MCF 10A (cell line): ENCODE measurements at regions of chr15 and their contacts with region 1.

Region 1: GRCh38 chr15:75578948-75579920 is at the start of gene PTPN9:
- DNase-seq: peak; percentile 74
- H3K4me3 Mint-ChIP-seq: peak within 1 kb of the TSS; percentile 95
- H3K27ac Mint-ChIP-seq: peak within 1 kb of the TSS; percentile 97
- H3K4me1 Mint-ChIP-seq: peaks cover 9% of the 10 kb centered on the region
- H3K27me3 Mint-ChIP-seq: no peaks in the 10 kb centered on the region
- CTCF ChIP-seq: peak; percentile 54
- total RNA-seq, gene PTPN9: 31.6 and 33.0 TPM in 2 replicates

Region 2: GRCh38 chr15:75517233-75517632 is 62.0 kb before region 1 on chr15:
- CTCF ChIA-PET with region 1: no interaction called
- POLR2A ChIA-PET with region 1: interaction called, 3 read pairs
- intact Hi-C with region 1: loop called (anchors 10 kb)
- DNase-seq: no peak
- H3K4me3 Mint-ChIP-seq: no peak overlapping the region
- H3K27ac Mint-ChIP-seq: no peak overlapping the region
- H3K4me1 Mint-ChIP-seq: peaks cover 13% of the 10 kb centered on the region
- H3K27me3 Mint-ChIP-seq: no peaks in the 10 kb centered on the region
- CTCF ChIP-seq: no peak

Region 3: GRCh38 chr15:75532413-75533147 is 46.7 kb before region 1 on chr15:
- CTCF ChIA-PET with region 1: interaction called, 3 read pairs
- POLR2A ChIA-PET with region 1: interaction called, 11 read pairs
- intact Hi-C with region 1: loop called (anchors 5 kb)
- DNase-seq: peak; percentile 87
- H3K4me3 Mint-ChIP-seq: peak overlapping the region; percentile 21
- H3K27ac Mint-ChIP-seq: peak overlapping the region; percentile 81
- H3K4me1 Mint-ChIP-seq: peaks cover 30% of the 10 kb centered on the region
- H3K27me3 Mint-ChIP-seq: no peaks in the 10 kb centered on the region
- CTCF ChIP-seq: peak; percentile 38

Region 4: GRCh38 chr15:75591655-75592364 is 12.6 kb after region 1 on chr15:
- CTCF ChIA-PET with region 1: no interaction called
- POLR2A ChIA-PET with region 1: interaction called, 10 read pairs
- intact Hi-C with region 1: no loop called
- DNase-seq: no peak
- H3K4me3 Mint-ChIP-seq: no peak overlapping the region
- H3K27ac Mint-ChIP-seq: no peak overlapping the region
- H3K4me1 Mint-ChIP-seq: no peaks in the 10 kb centered on the region
- H3K27me3 Mint-ChIP-seq: no peaks in the 10 kb centered on the region
- CTCF ChIP-seq: no peak

Region 5: DNA sequence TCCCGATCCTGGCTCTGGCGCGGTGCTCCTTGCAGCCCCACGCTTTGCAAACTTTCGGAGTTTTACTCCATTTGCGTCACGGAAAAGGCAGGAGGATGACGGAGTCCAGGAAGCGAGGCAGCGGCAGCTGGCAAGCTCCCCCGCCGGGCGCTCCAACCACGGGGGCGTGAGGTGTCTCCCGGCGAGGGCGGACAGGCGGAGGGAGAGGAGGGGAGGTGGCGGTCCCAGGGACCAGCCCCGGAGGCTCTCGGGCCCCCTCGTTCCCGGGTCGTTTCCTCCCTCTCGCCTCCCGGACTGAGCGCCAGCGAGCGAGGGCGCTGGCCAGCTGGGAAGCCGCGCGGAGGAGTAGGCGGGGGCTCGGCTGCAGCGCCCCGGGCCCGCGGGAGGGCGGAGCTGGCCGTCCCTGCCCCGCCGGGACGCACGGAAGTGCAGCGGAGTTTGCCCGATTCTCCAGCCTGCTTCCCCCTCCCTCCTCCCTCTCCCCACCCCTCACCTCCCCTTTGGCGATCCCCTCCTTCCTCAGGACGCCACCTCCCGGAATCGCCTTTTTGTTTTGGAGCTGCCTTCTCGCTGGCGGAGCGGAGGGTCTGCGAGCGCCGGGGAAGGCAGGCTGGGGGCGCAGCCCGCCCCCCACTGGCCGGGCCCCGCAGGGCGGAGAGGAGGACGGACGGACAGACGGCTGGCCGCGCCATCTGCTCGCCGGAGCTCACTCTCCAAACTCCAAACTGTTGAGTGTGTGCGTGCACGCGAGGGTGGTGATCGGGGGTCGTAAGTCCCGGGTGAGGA is 68.3 kb after region 1 on chr15 and contains the start of gene SNX33:
- CTCF ChIA-PET with region 1: no interaction called
- POLR2A ChIA-PET with region 1: interaction called, 13 read pairs
- intact Hi-C with region 1: loop called (anchors 10 kb)
- DNase-seq: peak; percentile 77
- H3K4me3 Mint-ChIP-seq: peak within 1 kb of the TSS; percentile 87
- H3K27ac Mint-ChIP-seq: peak within 1 kb of the TSS; percentile 78
- H3K4me1 Mint-ChIP-seq: peaks cover 47% of the 10 kb centered on the region
- H3K27me3 Mint-ChIP-seq: no peaks in the 10 kb centered on the region
- CTCF ChIP-seq: peak; percentile 48
- total RNA-seq, gene SNX33: 14.3 and 15.2 TPM in 2 replicates